ENCODE measurements at regions of chr7 and their contacts with region 1.

Region 1: GRCh38 chr7:25886387-25887240 is 265.4 kb upstream of the NFE2L3 start:
- ATAC-seq: peak in 5 of 8 experiments; percentile 74 to 90 (median 85)
- H3K4me3 ChIP-seq: no peak overlapping the region
- H3K27ac ChIP-seq: no peak overlapping the region
- H3K4me1 ChIP-seq: peaks cover 7 to 30% of the 10 kb centered on the region in 2 donors

Region 2: GRCh38 chr7:26061688-26062150 is 175.1 kb after region 1 on chr7:
- in situ Hi-C with region 1: loop called in 2 of 9 experiments (anchors 10 kb)
- ATAC-seq: peak in 6 of 8 experiments; percentile 38 to 90 (median 69)
- H3K4me3 ChIP-seq: no peak overlapping the region
- H3K27ac ChIP-seq: no peak overlapping the region
- H3K4me1 ChIP-seq: peaks cover 5 to 10% of the 10 kb centered on the region in 2 donors

Measured in motor neuron (in vitro differentiated cells).